Activated CD8-positive, alpha-beta T cell treated with anti-CD3 and anti-CD28 coated beads for 36 hours (primary cell): ENCODE measurements at regions of chr4 and their contacts with region 1.

Region 1: GRCh38 chr4:57190601-57191481 is 80.7 kb upstream of the IGFBP7 start:
- DNase-seq: peak; percentile 41
- ATAC-seq: no peak
- H3K4me3 Mint-ChIP-seq: no peak overlapping the region
- H3K27ac Mint-ChIP-seq: no peak overlapping the region
- H3K4me1 Mint-ChIP-seq: no peaks in the 10 kb centered on the region
- H3K27me3 Mint-ChIP-seq: peaks cover 19% of the 10 kb centered on the region
- CTCF ChIP-seq: peak; percentile 56

Region 2: GRCh38 chr4:57094832-57095223 is 96.0 kb before region 1 on chr4:
- CTCF ChIA-PET with region 1: no interaction called
- POLR2A ChIA-PET with region 1: no interaction called
- intact Hi-C with region 1: no loop called
- DNase-seq: no peak
- ATAC-seq: no peak
- H3K4me3 Mint-ChIP-seq: no peak overlapping the region
- H3K27ac Mint-ChIP-seq: no peak overlapping the region
- H3K4me1 Mint-ChIP-seq: no peaks in the 10 kb centered on the region
- H3K27me3 Mint-ChIP-seq: peaks cover 3% of the 10 kb centered on the region
- CTCF ChIP-seq: no peak

Region 3: DNA sequence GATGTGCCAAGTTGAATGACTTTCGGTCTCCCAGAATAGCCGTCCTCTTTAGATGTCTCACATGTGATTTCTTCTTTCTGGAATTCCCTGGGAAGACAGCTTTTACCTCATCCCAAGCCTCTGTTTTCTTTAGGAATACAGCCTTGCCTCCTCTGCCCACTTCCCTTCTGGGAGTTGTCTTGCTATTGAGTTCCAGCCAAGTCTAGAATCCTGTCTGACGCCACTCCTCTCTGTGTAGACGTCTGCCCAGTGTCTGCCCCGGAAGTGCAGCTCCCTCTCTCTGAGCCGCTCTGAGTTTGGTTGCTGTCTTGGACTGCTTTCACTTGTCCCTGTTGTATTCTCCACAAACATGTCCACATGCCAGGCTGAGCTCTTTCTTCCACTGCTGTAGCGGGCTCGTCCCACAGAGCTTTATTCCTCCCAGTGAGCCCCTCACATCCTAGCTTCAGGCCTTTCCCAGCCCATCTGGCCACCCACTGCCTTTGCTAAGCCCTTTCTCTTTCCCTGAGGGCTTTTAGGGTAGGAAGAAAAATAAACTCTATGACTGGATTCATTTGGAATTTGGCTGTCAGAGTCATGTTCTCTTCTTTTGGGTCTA is 71.7 kb before region 1 on chr4:
- CTCF ChIA-PET with region 1: no interaction called
- POLR2A ChIA-PET with region 1: no interaction called
- intact Hi-C with region 1: no loop called
- DNase-seq: no peak
- ATAC-seq: no peak
- H3K4me3 Mint-ChIP-seq: no peak overlapping the region
- H3K27ac Mint-ChIP-seq: no peak overlapping the region
- H3K4me1 Mint-ChIP-seq: no peaks in the 10 kb centered on the region
- H3K27me3 Mint-ChIP-seq: peaks cover 22% of the 10 kb centered on the region
- CTCF ChIP-seq: no peak

Region 4: GRCh38 chr4:57168982-57169381 is 21.9 kb before region 1 on chr4:
- CTCF ChIA-PET with region 1: interaction called, 39 read pairs
- POLR2A ChIA-PET with region 1: no interaction called
- intact Hi-C with region 1: no loop called
- DNase-seq: no peak
- ATAC-seq: no peak
- H3K4me3 Mint-ChIP-seq: no peak overlapping the region
- H3K27ac Mint-ChIP-seq: no peak overlapping the region
- H3K4me1 Mint-ChIP-seq: peaks cover 3% of the 10 kb centered on the region
- H3K27me3 Mint-ChIP-seq: peaks cover 22% of the 10 kb centered on the region
- CTCF ChIP-seq: no peak

Region 5: GRCh38 chr4:57200928-57201327 is 10.1 kb after region 1 on chr4:
- CTCF ChIA-PET with region 1: interaction called, 21 read pairs
- POLR2A ChIA-PET with region 1: no interaction called
- intact Hi-C with region 1: no loop called
- DNase-seq: no peak
- ATAC-seq: no peak
- H3K4me3 Mint-ChIP-seq: no peak overlapping the region
- H3K27ac Mint-ChIP-seq: no peak overlapping the region
- H3K4me1 Mint-ChIP-seq: no peaks in the 10 kb centered on the region
- H3K27me3 Mint-ChIP-seq: peaks cover 9% of the 10 kb centered on the region
- CTCF ChIP-seq: no peak

Region 6: DNA sequence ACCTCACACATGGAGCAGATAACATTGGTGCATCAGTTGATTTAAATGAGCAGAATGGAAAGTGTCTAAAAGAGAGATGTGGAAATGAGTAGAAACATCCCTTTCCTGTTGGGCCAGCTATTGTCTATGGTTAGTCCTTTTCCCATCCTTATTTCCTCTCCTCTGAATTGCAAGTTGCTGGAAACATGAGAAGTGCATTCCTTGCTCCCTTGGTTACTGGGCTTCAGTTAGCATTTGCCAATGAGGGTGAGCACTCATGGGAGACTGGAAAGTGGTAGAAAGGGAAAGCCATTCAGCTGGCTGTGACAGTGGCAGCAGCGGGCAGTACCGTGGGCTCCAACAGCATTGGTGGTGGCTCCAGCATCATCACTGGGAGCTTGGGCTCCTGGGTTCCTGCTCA is 15.3 kb after region 1 on chr4:
- CTCF ChIA-PET with region 1: interaction called, 21 read pairs
- POLR2A ChIA-PET with region 1: no interaction called
- intact Hi-C with region 1: no loop called
- DNase-seq: no peak
- ATAC-seq: no peak
- H3K4me3 Mint-ChIP-seq: no peak overlapping the region
- H3K27ac Mint-ChIP-seq: no peak overlapping the region
- H3K4me1 Mint-ChIP-seq: no peaks in the 10 kb centered on the region
- H3K27me3 Mint-ChIP-seq: peaks cover 3% of the 10 kb centered on the region
- CTCF ChIP-seq: no peak

Region 7: GRCh38 chr4:58368221-58368620 is 1177.4 kb after region 1 on chr4:
- CTCF ChIA-PET with region 1: no interaction called
- POLR2A ChIA-PET with region 1: no interaction called
- intact Hi-C with region 1: no loop called
- DNase-seq: no peak
- ATAC-seq: no peak
- H3K4me3 Mint-ChIP-seq: no peak overlapping the region
- H3K27ac Mint-ChIP-seq: no peak overlapping the region
- H3K4me1 Mint-ChIP-seq: no peaks in the 10 kb centered on the region
- H3K27me3 Mint-ChIP-seq: no peaks in the 10 kb centered on the region
- CTCF ChIP-seq: no peak